Activated B cell treated with CpG ODN at 0.5 μM for 24 hours (primary cell): ENCODE measurements at regions of chr2 and their contacts with region 1.

Region 1: DNA sequence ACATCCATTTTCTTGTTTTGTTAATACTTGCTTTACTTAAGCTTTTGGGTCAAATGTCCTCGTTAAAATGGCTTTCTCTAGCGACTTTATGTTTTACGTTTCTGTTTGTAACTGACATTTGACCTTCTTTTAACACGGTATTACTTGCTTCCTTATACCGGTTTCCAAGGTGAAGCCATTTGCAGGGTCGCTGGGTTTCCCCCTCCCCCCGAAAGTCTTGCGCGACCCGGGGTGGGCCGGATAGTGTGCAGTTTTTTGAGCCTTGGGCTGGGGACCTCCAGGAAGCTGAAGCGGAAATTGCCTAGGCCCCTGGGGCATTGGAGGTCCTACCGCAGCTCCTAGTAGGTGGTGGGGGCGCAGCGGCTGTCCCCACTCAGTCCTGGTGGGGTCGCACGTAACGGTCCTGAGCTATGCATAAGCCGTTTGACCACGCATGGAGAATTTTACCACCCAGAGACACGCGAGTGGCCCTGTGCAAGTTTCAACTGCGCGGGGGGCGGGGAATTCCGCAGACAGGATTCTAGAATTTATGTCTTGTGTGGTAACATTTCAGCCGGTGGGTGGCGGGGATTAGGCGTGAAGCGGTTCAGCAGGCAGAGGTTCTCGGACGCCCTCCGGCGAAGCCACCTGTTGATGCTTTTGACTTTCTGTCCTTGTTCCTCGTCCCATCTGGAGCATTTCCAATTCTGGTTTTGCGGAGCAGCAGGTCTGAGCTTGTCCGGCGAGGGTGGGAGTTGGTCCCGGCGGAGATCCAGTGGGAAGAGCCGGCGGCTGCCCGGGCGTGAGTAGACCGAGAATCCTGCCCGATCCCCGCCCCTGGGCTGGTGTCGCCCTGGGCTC is 2.4 kb downstream of the CFLAR start:
- DNase-seq: peak; percentile 78
- ATAC-seq: peak; percentile 70
- H3K4me3 Mint-ChIP-seq: peak overlapping the region; percentile 100
- H3K27ac Mint-ChIP-seq: peak overlapping the region; percentile 99
- H3K4me1 Mint-ChIP-seq: peaks cover 77% of the 10 kb centered on the region
- H3K27me3 Mint-ChIP-seq: no peaks in the 10 kb centered on the region
- CTCF ChIP-seq: no peak

Region 2: DNA sequence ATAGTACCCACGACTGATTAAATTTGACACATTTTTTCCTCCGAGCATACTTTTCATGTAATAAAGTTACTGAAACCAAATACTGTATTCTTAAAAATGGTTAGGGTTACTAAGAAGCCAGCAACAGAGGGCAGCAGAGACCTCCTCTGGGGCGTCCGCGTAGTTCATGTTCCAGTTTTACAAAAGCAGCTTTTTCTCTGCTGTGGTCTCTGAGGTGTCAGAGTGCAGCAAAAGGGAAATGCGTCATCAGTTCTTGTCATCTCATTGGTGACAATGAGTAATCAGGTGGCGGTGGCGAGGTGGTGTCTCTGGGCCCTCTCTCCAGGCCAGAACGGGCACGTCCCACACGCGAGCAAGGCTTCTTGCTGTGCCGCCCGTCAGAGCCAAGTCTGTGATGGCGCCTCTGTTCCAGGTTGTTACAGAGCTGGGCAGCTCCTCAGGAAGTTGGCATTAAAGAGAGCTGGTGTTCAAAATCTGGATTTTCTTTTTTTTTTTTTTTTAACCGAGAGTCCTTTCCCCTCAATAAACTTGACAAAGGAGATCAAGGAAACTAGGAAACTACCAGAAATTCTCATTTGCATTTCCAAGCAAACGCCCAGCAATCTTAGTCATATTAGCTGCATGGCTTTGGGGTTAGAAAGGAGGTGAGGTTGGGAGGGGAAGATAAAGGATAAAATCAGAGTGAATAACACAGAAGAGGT is 405.2 kb before region 1 on chr2:
- CTCF ChIA-PET with region 1: no interaction called
- POLR2A ChIA-PET with region 1: interaction called, 7 read pairs
- intact Hi-C with region 1: loop called (anchors 5 kb)
- DNase-seq: peak; percentile 68
- ATAC-seq: peak; percentile 99
- H3K4me3 Mint-ChIP-seq: peak overlapping the region; percentile 76
- H3K27ac Mint-ChIP-seq: peak overlapping the region; percentile 95
- H3K4me1 Mint-ChIP-seq: peaks cover 16% of the 10 kb centered on the region
- H3K27me3 Mint-ChIP-seq: peaks cover 2% of the 10 kb centered on the region
- CTCF ChIP-seq: no peak

Region 3: GRCh38 chr2:200888704-200889625 is 229.4 kb before region 1 on chr2 and contains the starts of genes NIF3L1 and PPIL3:
- CTCF ChIA-PET with region 1: no interaction called
- POLR2A ChIA-PET with region 1: interaction called, 33 read pairs
- intact Hi-C with region 1: loop called (anchors 1 kb)
- DNase-seq: peak; percentile 90
- ATAC-seq: peak; percentile 80
- H3K4me3 Mint-ChIP-seq: peak within 1 kb of the TSS; percentile 99
- H3K27ac Mint-ChIP-seq: peak within 1 kb of the TSS; percentile 100
- H3K4me1 Mint-ChIP-seq: peaks cover 40% of the 10 kb centered on the region
- H3K27me3 Mint-ChIP-seq: no peaks in the 10 kb centered on the region
- CTCF ChIP-seq: no peak
- total RNA-seq, gene NIF3L1: 32.2 and 32.3 TPM in 2 replicates
- total RNA-seq, gene PPIL3: 43.5 and 52.5 TPM in 2 replicates

Region 4: DNA sequence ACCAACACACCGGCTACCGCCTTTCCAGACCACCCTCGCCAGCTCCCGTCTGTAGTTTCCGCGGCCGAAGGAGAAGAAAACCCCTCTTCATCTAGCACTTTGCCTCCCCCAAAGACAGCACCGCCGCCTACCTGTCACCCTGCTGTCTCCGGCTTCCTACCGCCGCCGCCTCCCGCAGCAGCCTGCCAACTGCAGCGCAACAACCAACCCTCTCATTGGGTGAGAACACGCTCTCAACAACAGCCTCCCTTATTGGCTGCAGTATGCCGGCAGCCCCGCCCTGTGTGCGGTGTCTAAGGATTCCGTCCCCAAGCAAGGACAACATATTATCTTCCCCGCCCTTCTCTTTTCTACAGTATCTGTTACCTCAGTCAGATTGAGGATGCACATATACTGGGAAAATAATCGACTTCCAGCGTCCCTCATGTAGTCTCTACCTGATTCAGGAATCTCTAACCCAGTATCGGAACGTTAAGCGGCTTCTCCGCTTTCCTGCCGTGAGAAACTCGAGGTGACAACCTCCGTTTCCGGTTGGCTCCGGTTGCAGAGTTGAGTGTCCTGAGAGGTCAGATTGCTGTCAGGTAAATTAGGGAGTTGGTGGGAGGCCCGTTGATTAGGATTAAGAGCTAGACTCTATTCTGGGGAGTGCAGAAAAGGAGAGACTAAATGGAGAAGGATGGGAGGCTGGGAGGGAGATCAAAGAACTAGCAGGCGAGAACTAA is 46.7 kb before region 1 on chr2 and contains the starts of genes HYCC2 and NDUFB3:
- CTCF ChIA-PET with region 1: interaction called, 23 read pairs
- POLR2A ChIA-PET with region 1: interaction called, 46 read pairs
- intact Hi-C with region 1: loop called (anchors 1 kb)
- DNase-seq: peak; percentile 77
- ATAC-seq: peak; percentile 96
- H3K4me3 Mint-ChIP-seq: peak within 1 kb of the TSS; percentile 98
- H3K27ac Mint-ChIP-seq: peak within 1 kb of the TSS; percentile 96
- H3K4me1 Mint-ChIP-seq: peaks cover 50% of the 10 kb centered on the region
- H3K27me3 Mint-ChIP-seq: no peaks in the 10 kb centered on the region
- CTCF ChIP-seq: no peak
- total RNA-seq, gene HYCC2: 32.0 and 39.6 TPM in 2 replicates
- total RNA-seq, gene NDUFB3: 85.4 and 94.2 TPM in 2 replicates

Region 5: GRCh38 chr2:201151127-201151981 is 33.0 kb after region 1 on chr2:
- CTCF ChIA-PET with region 1: interaction called, 8 read pairs
- POLR2A ChIA-PET with region 1: interaction called, 84 read pairs
- intact Hi-C with region 1: loop called (anchors 1 kb)
- DNase-seq: no peak
- ATAC-seq: peak; percentile 78
- H3K4me3 Mint-ChIP-seq: peak overlapping the region; percentile 71
- H3K27ac Mint-ChIP-seq: peak overlapping the region; percentile 95
- H3K4me1 Mint-ChIP-seq: peaks cover 52% of the 10 kb centered on the region
- H3K27me3 Mint-ChIP-seq: no peaks in the 10 kb centered on the region
- CTCF ChIP-seq: no peak

Region 6: GRCh38 chr2:201182650-201183364 is 64.5 kb after region 1 on chr2 and contains the start of gene CASP10:
- CTCF ChIA-PET with region 1: interaction called, 15 read pairs
- POLR2A ChIA-PET with region 1: interaction called, 41 read pairs
- intact Hi-C with region 1: no loop called
- DNase-seq: no peak
- ATAC-seq: peak; percentile 77
- H3K4me3 Mint-ChIP-seq: peak within 1 kb of the TSS; percentile 92
- H3K27ac Mint-ChIP-seq: peak within 1 kb of the TSS; percentile 83
- H3K4me1 Mint-ChIP-seq: peaks cover 48% of the 10 kb centered on the region
- H3K27me3 Mint-ChIP-seq: no peaks in the 10 kb centered on the region
- CTCF ChIP-seq: no peak
- total RNA-seq, gene CASP10: 9.5 and 13.8 TPM in 2 replicates

Region 7: GRCh38 chr2:201451292-201452057 is 333.1 kb after region 1 on chr2 and contains the starts of genes STRADB and TRAK2:
- CTCF ChIA-PET with region 1: no interaction called
- POLR2A ChIA-PET with region 1: interaction called, 6 read pairs
- intact Hi-C with region 1: loop called (anchors 1 kb)
- DNase-seq: peak; percentile 89
- ATAC-seq: peak; percentile 93
- H3K4me3 Mint-ChIP-seq: peak within 1 kb of the TSS; percentile 97
- H3K27ac Mint-ChIP-seq: peak within 1 kb of the TSS; percentile 95
- H3K4me1 Mint-ChIP-seq: peaks cover 51% of the 10 kb centered on the region
- H3K27me3 Mint-ChIP-seq: no peaks in the 10 kb centered on the region
- CTCF ChIP-seq: no peak
- total RNA-seq, gene STRADB: 17.8 and 23.3 TPM in 2 replicates
- total RNA-seq, gene TRAK2: 17.7 and 20.1 TPM in 2 replicates